GM10248 (cell line): ENCODE measurements at regions of chr15 and their contacts with region 1.

Region 1: GRCh38 chr15:78241007-78241406 is 6.6 kb upstream of the ACSBG1 start:
- DNase-seq: peak; percentile 90
- CTCF ChIP-seq: peak; percentile 81

Region 2: DNA sequence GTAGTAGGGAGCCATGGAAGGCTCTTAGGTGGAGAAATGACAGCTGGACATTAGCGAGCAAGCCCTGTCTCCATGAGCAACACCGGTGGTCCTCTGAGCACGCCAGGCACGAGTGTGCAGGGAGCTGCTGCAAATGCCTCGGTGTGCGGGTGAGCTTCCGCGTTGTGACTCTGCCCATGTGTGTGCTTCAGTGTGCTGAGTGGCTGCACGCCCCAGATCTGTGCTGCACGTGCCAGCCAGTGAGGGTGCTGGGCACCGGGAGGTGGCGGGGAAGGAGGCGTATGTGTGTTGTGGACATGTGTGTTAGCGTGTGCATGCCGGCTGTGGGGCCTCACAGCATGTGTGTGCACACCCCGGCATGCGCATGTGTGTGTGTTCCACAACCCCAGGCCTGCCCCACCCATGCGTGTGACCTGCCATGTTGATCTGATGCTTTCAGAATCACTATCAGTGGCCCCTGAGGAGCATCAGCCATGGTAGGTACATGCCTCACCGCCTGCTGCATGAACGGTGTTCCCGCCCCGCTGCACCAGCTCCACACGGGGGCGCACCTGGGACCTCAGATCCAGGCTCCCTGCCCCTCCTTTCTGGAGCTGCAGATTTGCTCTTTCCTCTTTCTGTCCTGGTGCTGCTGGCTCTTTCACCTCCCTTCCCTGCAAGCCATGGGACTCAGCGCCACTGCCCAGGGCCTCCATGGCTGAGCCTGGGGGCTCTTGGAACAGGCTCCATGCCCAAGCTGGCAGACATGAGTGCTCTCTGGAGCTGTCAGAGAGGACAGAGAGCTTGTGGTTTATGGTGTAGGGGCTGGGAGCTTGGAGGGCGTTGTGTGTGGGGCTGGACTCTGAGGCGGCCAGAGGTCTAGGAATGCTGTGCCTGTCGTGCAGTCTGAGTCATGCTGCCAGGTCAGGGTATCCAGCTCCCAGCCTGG is 332.9 kb before region 1 on chr15:
- CTCF ChIA-PET with region 1: interaction called, 13 read pairs
- POLR2A ChIA-PET with region 1: no interaction called
- DNase-seq: peak; percentile 56
- CTCF ChIP-seq: peak; percentile 92

Region 3: GRCh38 chr15:77959432-77959879 is 281.6 kb before region 1 on chr15:
- CTCF ChIA-PET with region 1: interaction called, 30 read pairs
- POLR2A ChIA-PET with region 1: no interaction called
- DNase-seq: peak; percentile 85
- CTCF ChIP-seq: peak; percentile 96

Region 4: DNA sequence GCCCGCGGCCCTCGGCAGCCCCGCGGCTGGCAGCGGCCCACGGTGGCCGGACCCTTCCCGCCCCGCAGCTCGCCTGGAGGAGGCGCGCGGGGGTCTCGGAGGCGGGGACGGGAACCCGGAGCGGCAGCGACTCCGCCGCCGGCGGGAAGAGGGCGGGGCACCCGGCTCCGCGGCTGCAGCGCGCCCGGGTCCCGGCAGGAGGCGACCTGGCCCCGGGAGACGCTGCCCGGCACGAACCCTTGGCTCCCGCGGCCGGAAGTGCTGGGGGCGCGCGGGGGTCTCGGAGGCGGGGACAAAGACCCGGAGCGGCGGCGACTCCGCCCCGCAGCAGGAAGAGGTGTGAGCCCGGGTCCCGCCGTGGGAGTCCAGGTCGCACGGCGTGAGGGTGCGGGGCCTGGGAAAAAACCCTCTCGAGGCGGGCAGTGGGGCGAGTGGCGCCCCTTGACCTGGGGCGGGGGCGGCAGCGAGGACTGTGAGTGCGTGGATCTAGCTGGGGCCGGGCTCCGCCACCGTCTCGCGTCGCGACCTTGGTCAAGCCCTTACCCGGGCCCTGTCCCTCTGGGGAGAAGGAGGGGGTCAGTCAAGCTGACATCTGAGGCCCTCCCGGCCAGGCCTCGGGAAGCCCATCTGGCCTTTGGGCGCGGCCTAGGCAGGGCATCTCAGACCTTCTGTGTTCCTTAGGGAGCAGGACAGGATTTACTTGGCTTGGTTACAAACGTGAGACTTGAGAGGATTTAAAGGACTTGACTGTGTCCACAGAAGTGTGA is 109.5 kb before region 1 on chr15 and contains the start of gene CIB2:
- CTCF ChIA-PET with region 1: interaction called, 56 read pairs
- POLR2A ChIA-PET with region 1: no interaction called
- DNase-seq: peak; percentile 94
- CTCF ChIP-seq: peak; percentile 84

Region 5: GRCh38 chr15:78212546-78213424 is 28.2 kb before region 1 on chr15:
- CTCF ChIA-PET with region 1: interaction called, 20 read pairs
- POLR2A ChIA-PET with region 1: no interaction called
- DNase-seq: no peak
- CTCF ChIP-seq: no peak

Region 6: GRCh38 chr15:78225783-78226541 is 15.0 kb before region 1 on chr15:
- CTCF ChIA-PET with region 1: interaction called, 56 read pairs
- POLR2A ChIA-PET with region 1: no interaction called
- DNase-seq: peak; percentile 61
- CTCF ChIP-seq: no peak

Region 7: DNA sequence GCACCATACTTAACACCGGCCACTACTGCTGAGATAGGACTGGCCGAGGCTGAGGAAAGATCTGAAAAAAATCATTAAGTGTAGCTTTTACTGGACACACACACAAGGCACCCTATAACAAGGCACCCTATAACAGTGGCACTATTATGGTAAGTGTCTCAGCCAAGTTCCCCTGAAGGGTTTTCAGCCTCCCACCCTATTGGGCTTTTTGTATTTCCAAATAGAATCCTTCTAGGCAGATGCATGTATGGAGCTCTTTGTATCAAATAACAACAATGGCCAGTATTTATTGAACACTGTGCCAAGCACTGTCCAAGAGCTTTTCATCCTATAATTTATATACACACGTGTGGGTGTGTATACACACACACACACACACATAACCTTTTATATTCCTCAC is 16.7 kb after region 1 on chr15:
- CTCF ChIA-PET with region 1: interaction called, 19 read pairs
- POLR2A ChIA-PET with region 1: interaction called, 4 read pairs
- DNase-seq: no peak
- CTCF ChIP-seq: no peak